Naive thymus-derived CD4-positive, alpha-beta T cell (primary cell): ENCODE measurements at regions of chr7 and their contacts with region 1.

Region 1: DNA sequence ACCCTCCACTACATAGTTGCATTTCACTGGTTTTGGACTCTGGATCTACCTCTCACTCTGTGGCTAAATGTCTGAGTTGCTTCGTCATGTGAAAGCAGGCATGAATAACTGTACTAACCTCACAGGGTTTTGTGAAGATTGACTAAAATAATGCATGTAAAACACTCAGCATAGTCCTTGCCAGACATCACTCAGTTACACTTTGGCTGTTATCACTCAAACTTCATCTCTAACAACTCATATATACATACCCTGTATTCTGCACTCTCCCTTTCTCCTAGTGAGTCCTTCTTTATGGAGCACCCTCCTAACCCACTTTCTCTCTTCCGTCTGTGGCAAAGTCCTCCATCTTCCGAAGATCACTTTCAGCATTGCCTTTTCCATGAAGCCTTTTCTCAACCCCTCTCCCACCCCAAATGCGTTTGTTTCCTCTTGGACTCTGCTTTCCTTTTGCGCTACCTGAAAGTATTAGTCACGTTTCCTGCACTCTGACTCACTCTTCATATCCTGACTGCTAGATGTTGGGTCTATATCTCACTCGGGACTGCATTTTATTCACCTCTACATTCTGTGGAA is 72.6 kb downstream of the OSBPL3 start:
- DNase-seq: peak in 1 of 9 donors; percentile 49
- ATAC-seq: peak; percentile 56
- H3K4me3 ChIP-seq: peak overlapping the region; percentile 8
- H3K4me3 Mint-ChIP-seq: no peak overlapping the region
- H3K27ac ChIP-seq: no peak overlapping the region
- H3K27ac Mint-ChIP-seq: no peak overlapping the region
- H3K4me1 ChIP-seq: peaks cover 33 to 84% of the 10 kb centered on the region in 2 donors
- H3K4me1 Mint-ChIP-seq: peaks cover 26 to 47% (median 29%) of the 10 kb centered on the region in 7 donors
- H3K27me3 ChIP-seq: no peaks in the 10 kb centered on the region
- H3K27me3 Mint-ChIP-seq: no peaks in the 10 kb centered on the region

Region 2: DNA sequence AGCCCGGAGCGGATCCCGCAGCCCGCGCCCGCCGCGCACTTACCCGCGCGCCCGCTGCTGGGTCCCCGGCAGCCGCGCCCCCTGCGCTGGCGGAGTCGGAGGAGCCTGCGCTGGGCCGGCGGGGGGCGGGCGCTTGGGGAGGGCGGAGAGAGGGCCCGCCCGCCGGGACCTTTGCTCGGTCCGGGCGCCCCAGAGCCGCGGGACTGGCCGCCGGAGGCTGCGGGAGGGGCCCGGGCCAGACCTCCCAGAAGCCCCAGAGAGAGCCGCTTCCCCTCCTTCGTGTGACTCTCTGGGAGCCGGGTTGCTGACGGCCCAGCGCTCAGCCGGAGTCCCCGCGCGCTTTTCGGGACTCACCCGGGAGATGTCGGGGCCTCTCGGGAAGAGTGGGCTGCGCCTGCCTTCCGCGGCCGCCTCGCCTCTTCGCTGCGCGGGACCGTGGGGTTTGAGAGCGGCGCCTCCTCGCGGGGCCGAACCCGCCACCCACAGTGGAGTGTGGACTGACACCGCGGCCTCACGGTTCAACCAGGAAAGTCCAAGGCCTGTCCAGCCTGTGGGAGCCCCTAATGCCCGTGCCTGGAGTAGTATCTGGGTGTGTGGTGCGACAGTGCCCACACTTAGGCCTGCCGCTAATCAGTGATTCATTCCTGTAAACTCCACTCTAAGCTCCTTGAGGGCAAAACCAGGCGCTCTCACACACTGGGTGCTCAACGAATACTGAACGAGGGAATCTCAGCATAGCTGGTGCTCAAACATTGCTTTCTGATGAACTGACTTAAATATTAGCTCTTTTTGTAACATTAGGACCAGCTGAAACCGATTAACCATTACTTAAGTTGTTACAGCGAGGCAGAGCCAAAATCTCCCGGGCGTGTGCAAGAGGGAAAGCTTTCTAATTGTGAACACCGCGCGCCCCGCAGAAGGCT is 149.8 kb before region 1 on chr7 and contains the start of gene GSDME:
- CTCF ChIA-PET with region 1: no interaction called
- POLR2A ChIA-PET with region 1: no interaction called
- intact Hi-C with region 1: loop called in 1 of 2 experiments (anchors 5 kb)
- DNase-seq: peak in 7 of 9 donors; percentile 10 to 67 (median 14)
- ATAC-seq: peak; percentile 73
- H3K4me3 ChIP-seq: peak within 1 kb of the TSS; percentile 46
- H3K4me3 Mint-ChIP-seq: peak within 1 kb of the TSS; percentile 74 to 94 (median 84)
- H3K27ac ChIP-seq: no peak within 1 kb of the TSS
- H3K27ac Mint-ChIP-seq: peak within 1 kb of the TSS in 3 of 9 donors; percentile 11 to 43 (median 38)
- H3K4me1 ChIP-seq: peaks cover 5 to 10% of the 10 kb centered on the region in 2 donors
- H3K4me1 Mint-ChIP-seq: peaks cover 9 to 30% (median 24%) of the 10 kb centered on the region in 7 donors
- H3K27me3 ChIP-seq: peaks cover 3 to 7% of the 10 kb centered on the region in 2 donors
- H3K27me3 Mint-ChIP-seq: peaks cover 42 to 67% (median 53%) of the 10 kb centered on the region in 5 donors
- total RNA-seq, gene GSDME: 0.42 to 5.0 (median 0.92) TPM

Region 3: GRCh38 chr7:24877790-24878311 is 29.5 kb before region 1 on chr7:
- CTCF ChIA-PET with region 1: no interaction called
- POLR2A ChIA-PET with region 1: interaction called, 3 read pairs
- intact Hi-C with region 1: loop called in 1 of 2 experiments (anchors 5 kb)
- DNase-seq: peak in 1 of 9 donors; percentile 24
- ATAC-seq: peak; percentile 42
- H3K4me3 ChIP-seq: no peak overlapping the region
- H3K4me3 Mint-ChIP-seq: peak overlapping the region in 1 of 10 donors; percentile 49
- H3K27ac ChIP-seq: no peak overlapping the region
- H3K27ac Mint-ChIP-seq: peak overlapping the region in 2 of 9 donors; percentile 59 to 72
- H3K4me1 ChIP-seq: no peaks in the 10 kb centered on the region
- H3K4me1 Mint-ChIP-seq: peaks cover 0 to 53% (median 0%) of the 10 kb centered on the region in 7 donors
- H3K27me3 ChIP-seq: no peaks in the 10 kb centered on the region
- H3K27me3 Mint-ChIP-seq: no peaks in the 10 kb centered on the region

Region 4: GRCh38 chr7:24896031-24896501 is 11.3 kb before region 1 on chr7:
- CTCF ChIA-PET with region 1: interaction called, 3 read pairs
- POLR2A ChIA-PET with region 1: no interaction called
- intact Hi-C with region 1: loop called (anchors 1 to 2 kb)
- DNase-seq: no peak
- ATAC-seq: peak; percentile 64
- H3K4me3 ChIP-seq: no peak overlapping the region
- H3K4me3 Mint-ChIP-seq: peak overlapping the region in 1 of 10 donors; percentile 8
- H3K27ac ChIP-seq: no peak overlapping the region
- H3K27ac Mint-ChIP-seq: peak overlapping the region in 2 of 9 donors; percentile 36 to 54
- H3K4me1 ChIP-seq: peaks cover 0 to 22% of the 10 kb centered on the region in 2 donors
- H3K4me1 Mint-ChIP-seq: peaks cover 16 to 72% (median 30%) of the 10 kb centered on the region in 7 donors
- H3K27me3 ChIP-seq: no peaks in the 10 kb centered on the region
- H3K27me3 Mint-ChIP-seq: no peaks in the 10 kb centered on the region

Region 5: GRCh38 chr7:24924375-24924774 is 17.0 kb after region 1 on chr7:
- CTCF ChIA-PET with region 1: interaction called, 4 read pairs
- POLR2A ChIA-PET with region 1: no interaction called
- intact Hi-C with region 1: loop called in 1 of 2 experiments (anchors 1 kb)
- DNase-seq: peak in 1 of 9 donors; percentile 10
- ATAC-seq: peak; percentile 54
- H3K4me3 ChIP-seq: no peak overlapping the region
- H3K4me3 Mint-ChIP-seq: peak overlapping the region in 1 of 10 donors; percentile 73
- H3K27ac ChIP-seq: no peak overlapping the region
- H3K27ac Mint-ChIP-seq: peak overlapping the region in 1 of 9 donors; percentile 91
- H3K4me1 ChIP-seq: peaks cover 0 to 16% of the 10 kb centered on the region in 2 donors
- H3K4me1 Mint-ChIP-seq: peaks cover 23 to 89% (median 37%) of the 10 kb centered on the region in 7 donors
- H3K27me3 ChIP-seq: no peaks in the 10 kb centered on the region
- H3K27me3 Mint-ChIP-seq: no peaks in the 10 kb centered on the region

Region 6: GRCh38 chr7:25028370-25029021 is 121.1 kb after region 1 on chr7:
- CTCF ChIA-PET with region 1: no interaction called
- POLR2A ChIA-PET with region 1: no interaction called
- intact Hi-C with region 1: loop called in 1 of 2 experiments (anchors 5 kb)
- DNase-seq: peak in 8 of 9 donors; percentile 10 to 64 (median 48)
- ATAC-seq: peak; percentile 75
- H3K4me3 ChIP-seq: peak overlapping the region; percentile 17
- H3K4me3 Mint-ChIP-seq: peak overlapping the region in 9 of 10 donors; percentile 10 to 88 (median 67)
- H3K27ac ChIP-seq: peak overlapping the region; percentile 25
- H3K27ac Mint-ChIP-seq: peak overlapping the region; percentile 66 to 93 (median 89)
- H3K4me1 ChIP-seq: peaks cover 23 to 32% of the 10 kb centered on the region in 2 donors
- H3K4me1 Mint-ChIP-seq: peaks cover 21 to 40% (median 27%) of the 10 kb centered on the region in 7 donors
- H3K27me3 ChIP-seq: no peaks in the 10 kb centered on the region
- H3K27me3 Mint-ChIP-seq: peaks cover 0 to 11% (median 0%) of the 10 kb centered on the region in 5 donors